ENCODE measurements at regions of chr1 and their contacts with region 1.

Region 1: DNA sequence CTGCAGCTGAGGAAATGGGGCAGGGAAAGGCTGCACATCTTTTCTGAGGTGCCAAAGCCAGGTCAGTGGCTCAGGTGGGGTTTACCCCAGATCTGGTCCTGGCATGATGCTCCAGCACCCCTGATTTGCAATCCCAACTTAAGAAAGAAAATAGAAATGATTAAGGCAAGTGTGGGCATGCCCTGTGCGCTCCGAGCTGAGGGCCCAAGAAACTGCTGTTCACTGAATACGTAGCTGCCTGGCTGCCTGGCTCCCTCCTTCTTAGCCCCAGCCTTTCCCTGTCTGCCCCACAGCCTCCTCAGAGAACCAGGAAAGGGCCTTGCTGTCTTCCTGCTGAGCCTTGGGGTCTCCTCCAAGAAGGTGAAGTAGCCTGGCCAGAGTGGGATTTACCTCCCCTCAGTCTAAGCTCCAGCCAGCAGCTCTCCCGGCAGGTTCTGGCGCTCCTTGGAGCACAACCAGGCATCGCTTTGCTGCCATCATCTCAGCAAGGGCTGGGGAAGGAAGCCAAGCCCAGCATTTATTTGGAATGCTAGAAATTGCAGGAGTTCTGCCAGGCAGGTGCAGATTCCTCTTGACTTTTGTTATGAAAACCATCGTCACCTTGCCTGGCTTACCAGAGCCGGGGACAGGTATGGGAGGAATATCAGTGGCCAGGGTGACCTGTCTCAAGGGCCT is 51.3 kb upstream of the SELENON start:
- DNase-seq: no peak
- H3K4me3 ChIP-seq: no peak overlapping the region
- H3K27ac ChIP-seq: peak overlapping the region; percentile 21 to 69 (median 52)
- H3K4me1 ChIP-seq: peaks cover 14 to 56% (median 39%) of the 10 kb centered on the region in 3 donors
- H3K27me3 ChIP-seq: no peaks in the 10 kb centered on the region
- CTCF ChIP-seq: no peak
- POLR2A ChIP-seq: no peak

Region 2: GRCh38 chr1:25487628-25488027 is 261.0 kb before region 1 on chr1:
- intact Hi-C with region 1: no loop called
- DNase-seq: no peak
- H3K4me3 ChIP-seq: no peak overlapping the region
- H3K27ac ChIP-seq: no peak overlapping the region
- H3K4me1 ChIP-seq: peaks cover 7 to 32% (median 7%) of the 10 kb centered on the region in 3 donors
- H3K27me3 ChIP-seq: no peaks in the 10 kb centered on the region
- CTCF ChIP-seq: peak in 5 of 6 experiments; percentile 16 to 53 (median 24)
- POLR2A ChIP-seq: no peak

Region 3: GRCh38 chr1:25520446-25521061 is 228.1 kb before region 1 on chr1:
- intact Hi-C with region 1: no loop called
- DNase-seq: no peak
- H3K4me3 ChIP-seq: no peak overlapping the region
- H3K27ac ChIP-seq: no peak overlapping the region
- H3K4me1 ChIP-seq: no peaks in the 10 kb centered on the region
- H3K27me3 ChIP-seq: no peaks in the 10 kb centered on the region
- CTCF ChIP-seq: peak; percentile 65 to 88 (median 80)
- POLR2A ChIP-seq: no peak

Region 4: DNA sequence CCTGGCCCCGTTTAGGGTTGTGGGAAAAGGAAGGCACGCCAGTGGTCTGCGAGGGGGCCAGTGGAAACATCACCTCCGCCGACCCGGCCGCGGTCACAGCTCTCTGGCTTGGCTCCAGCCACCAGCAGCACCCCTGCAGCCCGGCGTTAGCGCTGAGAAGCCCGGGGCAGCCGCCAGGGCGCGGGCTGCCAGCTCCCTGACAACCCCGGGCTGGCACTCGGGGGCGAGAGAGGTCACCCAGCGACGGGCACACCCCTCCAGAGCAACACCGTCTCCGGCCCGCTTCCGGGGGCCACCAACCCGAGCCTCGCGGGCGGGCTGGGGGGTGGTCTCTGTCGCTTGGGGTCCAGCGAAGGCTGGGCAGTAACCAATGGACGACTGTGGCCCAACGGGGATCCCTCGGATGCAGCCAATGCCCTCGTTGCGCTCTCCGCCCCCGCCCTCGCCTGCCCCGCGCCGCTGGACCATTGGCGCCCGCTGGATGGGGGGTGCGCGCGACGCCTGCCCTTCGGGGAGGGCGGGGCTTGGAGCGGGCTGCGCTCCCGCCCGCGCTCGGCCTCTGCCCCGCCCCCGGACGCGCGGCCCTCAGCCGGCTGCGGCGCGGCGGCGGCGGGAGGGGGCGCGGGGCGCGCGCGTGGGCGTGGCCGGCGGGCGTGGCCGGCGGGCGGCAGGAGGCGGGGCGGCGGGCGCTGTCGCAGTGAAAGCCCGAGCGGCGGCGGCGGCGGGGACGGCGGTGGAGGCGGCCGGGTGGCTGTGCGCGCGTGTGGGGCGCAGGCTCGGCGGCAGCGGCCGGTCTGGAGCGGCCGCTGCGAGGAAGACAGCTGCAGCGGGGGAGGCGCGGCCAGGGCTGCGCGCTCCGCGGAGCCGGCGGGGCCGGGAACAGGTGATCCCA is 132.3 kb before region 1 on chr1 and contains the start of gene MAN1C1:
- intact Hi-C with region 1: loop called (anchors 5 kb)
- DNase-seq: no peak
- H3K4me3 ChIP-seq: peak within 1 kb of the TSS; percentile 69 to 93 (median 86)
- H3K27ac ChIP-seq: peak within 1 kb of the TSS; percentile 67 to 92 (median 82)
- H3K4me1 ChIP-seq: peaks cover 16 to 60% (median 37%) of the 10 kb centered on the region in 3 donors
- H3K27me3 ChIP-seq: peaks cover 0 to 21% (median 0%) of the 10 kb centered on the region in 4 donors
- CTCF ChIP-seq: peak in 5 of 6 experiments; percentile 38 to 57 (median 45)
- POLR2A ChIP-seq: peak in 2 of 4 donors; percentile 43 to 51
- total RNA-seq, gene MAN1C1: 0.91 to 7.4 (median 3.8) TPM